HEK293T (cell line): ENCODE measurements at regions of chr5 and their contacts with region 1.

Region 1: GRCh38 chr5:7856855-7857254 is 5.9 kb upstream of the CFAP90 start:
- DNase-seq: peak; percentile 56

Region 2: DNA sequence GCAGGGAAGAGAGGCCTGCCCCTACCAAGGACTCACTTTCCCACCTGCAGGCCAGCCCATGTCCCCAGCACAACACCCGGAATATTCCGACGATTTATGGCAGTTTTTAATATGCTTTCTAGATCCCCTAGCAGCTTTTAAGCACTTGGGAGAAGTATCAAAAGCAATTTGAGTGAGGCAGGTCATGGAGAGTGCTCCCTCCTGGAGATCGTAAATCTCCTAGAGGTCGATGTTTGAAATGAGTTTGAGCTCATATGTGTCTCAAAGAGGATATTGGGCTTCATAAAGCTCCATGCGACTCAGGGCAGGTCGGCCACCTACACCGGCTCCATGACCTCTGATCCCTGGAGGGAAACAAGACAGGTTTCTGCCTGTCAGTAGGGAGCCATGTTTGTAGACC is 33.3 kb before region 1 on chr5:
- CTCF ChIA-PET with region 1: interaction called, 10 read pairs
- POLR2A ChIA-PET with region 1: no interaction called
- DNase-seq: no peak

Region 3: GRCh38 chr5:7837403-7837802 is 19.5 kb before region 1 on chr5:
- CTCF ChIA-PET with region 1: no interaction called
- POLR2A ChIA-PET with region 1: no interaction called
- DNase-seq: no peak

Region 4: GRCh38 chr5:7868773-7869473 is 12.1 kb after region 1 on chr5 and contains the starts of genes FASTKD3 and MTRR:
- CTCF ChIA-PET with region 1: interaction called, 5 read pairs
- POLR2A ChIA-PET with region 1: interaction called, 18 read pairs
- DNase-seq: peak; percentile 91

Region 5: DNA sequence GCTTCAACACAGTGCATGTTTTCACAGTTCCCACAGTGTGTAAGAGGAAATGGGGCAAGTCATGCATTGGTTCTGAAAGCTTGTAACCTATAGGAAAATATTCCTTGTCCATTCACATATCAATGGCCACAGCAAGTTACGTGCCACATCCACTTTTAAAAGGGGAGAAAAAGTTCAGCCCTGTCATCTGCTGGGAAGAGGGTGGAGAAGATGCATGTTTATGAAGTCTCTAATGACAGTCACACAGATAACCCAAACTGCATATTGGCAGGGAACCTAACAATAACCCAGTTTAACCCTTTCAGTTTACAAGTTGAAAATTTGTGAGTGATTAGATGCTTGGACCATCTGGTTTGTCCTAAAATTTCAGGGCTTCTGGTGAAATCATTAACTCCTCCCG is 171.4 kb after region 1 on chr5:
- CTCF ChIA-PET with region 1: no interaction called
- POLR2A ChIA-PET with region 1: no interaction called
- DNase-seq: no peak